ENCODE measurements at regions of chr19 and their contacts with region 1.

Region 1: DNA sequence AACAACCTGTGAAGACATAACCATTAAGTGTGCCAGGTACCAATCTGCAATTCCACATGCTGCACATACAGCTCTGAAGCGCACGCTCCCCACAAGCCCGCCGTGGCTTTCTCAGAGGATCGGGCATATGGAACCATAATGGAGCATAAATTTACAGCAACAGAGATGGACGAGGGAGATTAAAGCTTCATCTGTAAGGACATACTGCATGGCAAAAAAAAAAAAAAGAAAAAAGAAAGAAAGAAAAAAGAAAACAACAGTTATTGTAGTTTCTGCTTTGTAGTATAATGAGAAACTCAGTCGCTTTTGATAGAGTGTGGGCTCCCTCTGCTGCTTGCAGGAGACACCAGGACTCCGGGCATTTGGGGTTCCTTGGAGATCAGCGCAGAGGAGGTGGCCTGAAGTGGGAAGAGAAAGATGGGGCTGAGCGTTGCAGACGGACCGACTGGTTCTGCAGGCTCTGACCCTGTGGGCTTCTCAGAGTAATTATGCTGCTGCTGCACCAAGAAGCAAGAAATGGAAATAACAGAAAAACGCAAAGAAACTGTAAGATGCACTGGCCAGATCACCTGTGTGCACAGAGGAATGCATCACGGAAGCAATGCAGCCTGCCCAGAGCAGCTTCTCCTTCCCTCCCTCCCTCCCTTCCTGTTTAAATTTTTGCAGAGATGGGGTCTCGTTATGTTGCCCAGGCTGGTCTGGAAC is 10.8 kb upstream of the PDCD5 start:
- DNase-seq: peak; percentile 65
- CTCF ChIP-seq: peak; percentile 59

Region 2: DNA sequence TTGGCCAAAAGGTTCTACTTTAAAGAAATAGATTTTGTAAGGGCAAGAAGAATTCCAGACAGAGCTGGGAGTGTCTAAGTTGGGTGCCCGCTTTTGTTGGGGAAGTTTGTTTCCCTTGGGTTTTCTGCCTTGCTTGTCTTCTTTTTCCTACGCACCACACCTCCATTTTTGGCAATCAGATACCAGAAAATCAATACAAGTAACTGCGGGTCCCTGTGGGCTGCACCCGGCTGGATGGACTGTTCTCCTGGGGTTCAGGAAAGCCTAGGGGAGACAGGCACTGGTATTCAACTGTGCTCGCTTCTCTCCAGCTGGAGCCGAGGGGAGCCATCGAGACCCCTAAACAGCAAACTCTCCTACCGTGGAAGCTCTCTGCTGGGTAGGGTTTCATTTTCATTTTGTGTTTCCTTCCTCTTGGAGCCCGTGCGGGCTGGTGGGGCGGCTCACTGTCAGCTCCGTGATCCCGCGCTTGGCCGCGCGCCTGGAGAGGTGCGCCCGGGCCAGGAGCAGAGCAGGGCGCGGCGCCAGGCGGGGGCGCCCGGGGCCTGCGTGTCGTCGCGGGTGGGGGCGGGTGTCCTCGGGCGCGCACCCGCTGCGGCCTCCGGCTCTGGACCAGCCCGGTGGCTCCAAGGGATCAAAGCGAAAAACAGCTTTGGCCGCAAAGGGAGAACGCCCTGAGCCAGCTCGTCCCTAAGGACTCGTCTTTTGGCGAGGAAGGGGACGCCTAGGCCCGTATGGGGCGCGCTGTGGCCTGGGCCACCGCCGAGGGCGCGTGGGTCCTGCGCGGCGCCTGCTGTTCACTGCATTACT is 1850.8 kb before region 1 on chr19:
- in situ Hi-C with region 1: loop called (anchors 25 kb)
- DNase-seq: peak; percentile 49
- CTCF ChIP-seq: no peak

Region 3: DNA sequence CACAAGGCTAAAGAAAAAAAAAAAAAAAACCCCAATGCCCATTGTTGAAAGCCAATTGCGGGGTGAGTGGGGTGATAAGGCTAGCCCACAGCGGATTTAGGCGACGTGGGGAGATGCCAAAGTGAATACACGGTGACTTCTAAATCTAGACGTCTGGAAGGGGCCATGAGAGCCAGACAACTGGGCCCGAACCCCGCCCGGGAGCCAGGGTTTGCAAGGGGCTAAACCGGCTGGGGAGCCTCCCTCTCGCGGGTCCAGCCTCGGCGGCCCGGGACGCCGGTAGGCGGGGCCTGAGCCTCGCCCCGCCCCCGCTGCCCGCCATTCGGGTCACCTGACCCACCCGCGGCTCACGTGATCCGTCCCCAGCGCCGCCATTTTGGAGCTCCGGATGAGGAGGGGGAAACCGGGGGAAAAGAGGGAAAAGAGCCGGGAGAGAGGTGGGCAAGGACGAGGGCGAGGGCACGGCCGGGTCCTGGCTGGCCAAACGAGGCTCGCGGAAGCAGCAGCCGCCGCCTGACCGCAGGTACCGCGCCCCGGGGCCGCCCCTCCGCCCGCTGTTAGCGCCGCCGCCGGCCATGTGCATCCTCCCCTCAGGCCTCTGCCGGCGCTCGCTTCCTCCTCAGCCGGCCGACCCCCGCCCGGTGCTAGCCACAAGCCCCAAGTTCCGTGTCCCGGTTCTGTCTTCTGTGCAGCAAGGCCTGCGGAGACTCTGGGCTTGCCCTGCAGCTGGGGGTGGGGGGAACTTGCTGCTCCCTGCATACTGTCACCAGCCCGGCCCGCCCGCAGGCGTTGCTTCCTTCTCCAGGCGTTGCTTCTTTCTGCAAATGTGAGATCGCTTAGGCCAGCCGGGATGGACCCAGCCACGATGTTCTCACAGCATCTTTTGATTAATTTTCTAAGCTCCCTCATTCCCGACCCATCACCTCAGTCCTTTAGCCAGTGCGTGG is 224.7 kb before region 1 on chr19 and contains the start of gene ZNF507:
- in situ Hi-C with region 1: loop called (anchors 25 kb)
- DNase-seq: peak; percentile 98
- CTCF ChIP-seq: peak; percentile 9

Measured in GM13976 (cell line).